PC-9 (cell line): ENCODE measurements at regions of chrX and their contacts with region 1.

Region 1: DNA sequence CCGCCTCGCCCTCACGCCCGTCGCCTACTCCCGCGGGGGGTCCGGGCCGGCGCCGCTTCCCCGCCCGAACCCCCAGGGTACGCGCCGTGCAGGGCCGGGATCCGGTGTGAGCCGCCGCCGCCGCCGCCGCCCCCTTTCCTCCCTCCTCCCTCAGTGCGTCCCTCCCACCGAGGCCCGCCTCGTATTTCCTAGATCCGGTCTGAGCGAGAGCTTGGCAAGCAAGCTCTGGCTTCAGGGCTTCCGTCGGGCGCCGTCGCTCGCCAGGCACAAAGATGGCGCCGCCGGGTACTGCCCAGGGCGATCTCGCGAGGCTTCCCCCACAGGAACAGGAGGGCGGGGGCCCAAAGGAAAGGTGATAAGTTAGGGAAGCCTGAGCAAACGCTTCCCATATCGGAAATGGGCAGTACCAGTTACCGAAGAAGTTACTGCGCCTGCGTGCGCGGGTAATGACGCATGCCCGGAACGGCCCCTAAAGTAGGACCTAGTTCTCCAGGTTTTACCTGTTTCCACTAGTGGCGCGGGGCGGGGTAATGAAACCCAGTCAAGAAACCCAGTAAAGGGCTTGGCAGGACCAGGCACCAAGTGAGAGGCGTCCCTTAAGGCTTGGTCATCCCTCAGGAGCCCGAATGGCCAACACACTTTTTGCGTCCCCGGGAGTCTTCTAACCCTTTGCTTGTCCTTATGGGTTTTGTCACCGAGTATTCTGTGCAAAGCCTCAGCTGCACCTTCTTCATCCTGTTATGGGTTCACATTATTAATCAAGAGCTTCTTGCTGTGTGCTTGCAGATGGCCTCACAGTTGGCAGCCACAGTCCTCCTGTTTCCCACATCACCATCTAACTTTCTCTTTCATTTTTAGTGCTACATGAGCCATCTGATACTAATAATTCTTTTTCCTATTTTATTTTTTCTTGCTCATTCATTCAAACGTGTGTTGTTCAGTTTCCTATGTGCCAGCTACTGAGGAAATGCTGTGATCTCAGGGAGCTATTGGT is at the start of gene TAB3:
- DNase-seq: peak; percentile 95 to 96
- H3K4me3 ChIP-seq: peak within 1 kb of the TSS; percentile 89
- H3K27ac ChIP-seq: peak within 1 kb of the TSS; percentile 77
- H3K4me1 ChIP-seq: peaks cover 53% of the 10 kb centered on the region
- H3K27me3 ChIP-seq: no peaks in the 10 kb centered on the region
- CTCF ChIP-seq: no peak
- total RNA-seq, gene TAB3: 46.7 and 50.8 TPM in 2 replicates

Region 2: GRCh38 chrX:29662759-29663503 is 1226.5 kb before region 1 on chrX:
- CTCF ChIA-PET with region 1: no interaction called
- POLR2A ChIA-PET with region 1: interaction called, 10 read pairs
- intact Hi-C with region 1: no loop called
- DNase-seq: peak; percentile 63 to 90
- H3K4me3 ChIP-seq: peak overlapping the region; percentile 14; the same call in 1 of the 2 replicates
- H3K27ac ChIP-seq: peak overlapping the region; percentile 92
- H3K4me1 ChIP-seq: peaks cover 29% of the 10 kb centered on the region
- H3K27me3 ChIP-seq: no peaks in the 10 kb centered on the region
- CTCF ChIP-seq: no peak

Region 3: GRCh38 chrX:30875961-30876360 is 13.5 kb before region 1 on chrX:
- CTCF ChIA-PET with region 1: no interaction called
- POLR2A ChIA-PET with region 1: interaction called, 6 read pairs
- intact Hi-C with region 1: loop called (anchors 1 kb)
- DNase-seq: peak in 1 of 2 experiments; percentile 86
- H3K4me3 ChIP-seq: peak overlapping the region; percentile 45; the same call in 1 of the 2 replicates
- H3K27ac ChIP-seq: peak overlapping the region; percentile 95
- H3K4me1 ChIP-seq: peaks cover 46% of the 10 kb centered on the region
- H3K27me3 ChIP-seq: no peaks in the 10 kb centered on the region
- CTCF ChIP-seq: no peak

Region 4: DNA sequence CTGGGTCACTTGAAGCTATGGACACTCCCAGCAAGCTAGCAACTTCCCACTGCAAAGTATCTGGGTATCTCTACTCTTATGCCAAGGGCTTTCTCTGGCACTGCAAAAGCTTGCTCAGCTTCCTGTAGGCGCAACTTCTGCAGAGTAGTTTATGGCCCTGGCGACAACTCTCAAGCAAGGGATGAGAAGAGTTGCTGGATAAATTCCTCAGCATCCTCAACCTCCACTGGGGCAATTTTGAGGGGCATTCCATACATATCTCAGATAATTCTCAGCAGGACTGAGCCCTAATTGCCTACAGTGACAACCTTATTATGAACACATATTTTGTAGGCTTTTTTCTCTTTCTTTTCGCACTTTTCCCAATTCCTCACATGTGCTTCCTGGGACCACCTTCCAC is 30.8 kb after region 1 on chrX:
- CTCF ChIA-PET with region 1: no interaction called
- POLR2A ChIA-PET with region 1: no interaction called
- intact Hi-C with region 1: no loop called
- DNase-seq: no peak
- H3K4me3 ChIP-seq: no peak overlapping the region
- H3K27ac ChIP-seq: no peak overlapping the region
- H3K4me1 ChIP-seq: no peaks in the 10 kb centered on the region
- H3K27me3 ChIP-seq: no peaks in the 10 kb centered on the region
- CTCF ChIP-seq: no peak

Region 5: GRCh38 chrX:30935985-30936384 is 46.5 kb after region 1 on chrX:
- CTCF ChIA-PET with region 1: no interaction called
- POLR2A ChIA-PET with region 1: interaction called, 4 read pairs
- intact Hi-C with region 1: loop called (anchors 1 kb)
- DNase-seq: peak in 1 of 2 experiments; percentile 17
- H3K4me3 ChIP-seq: no peak overlapping the region
- H3K27ac ChIP-seq: no peak overlapping the region
- H3K4me1 ChIP-seq: peaks cover 14% of the 10 kb centered on the region; the same call in 1 of the 2 replicates
- H3K27me3 ChIP-seq: no peaks in the 10 kb centered on the region
- CTCF ChIP-seq: 0 out of 2 replicates have a peak, but pooled peaks have one; percentile 34

Region 6: DNA sequence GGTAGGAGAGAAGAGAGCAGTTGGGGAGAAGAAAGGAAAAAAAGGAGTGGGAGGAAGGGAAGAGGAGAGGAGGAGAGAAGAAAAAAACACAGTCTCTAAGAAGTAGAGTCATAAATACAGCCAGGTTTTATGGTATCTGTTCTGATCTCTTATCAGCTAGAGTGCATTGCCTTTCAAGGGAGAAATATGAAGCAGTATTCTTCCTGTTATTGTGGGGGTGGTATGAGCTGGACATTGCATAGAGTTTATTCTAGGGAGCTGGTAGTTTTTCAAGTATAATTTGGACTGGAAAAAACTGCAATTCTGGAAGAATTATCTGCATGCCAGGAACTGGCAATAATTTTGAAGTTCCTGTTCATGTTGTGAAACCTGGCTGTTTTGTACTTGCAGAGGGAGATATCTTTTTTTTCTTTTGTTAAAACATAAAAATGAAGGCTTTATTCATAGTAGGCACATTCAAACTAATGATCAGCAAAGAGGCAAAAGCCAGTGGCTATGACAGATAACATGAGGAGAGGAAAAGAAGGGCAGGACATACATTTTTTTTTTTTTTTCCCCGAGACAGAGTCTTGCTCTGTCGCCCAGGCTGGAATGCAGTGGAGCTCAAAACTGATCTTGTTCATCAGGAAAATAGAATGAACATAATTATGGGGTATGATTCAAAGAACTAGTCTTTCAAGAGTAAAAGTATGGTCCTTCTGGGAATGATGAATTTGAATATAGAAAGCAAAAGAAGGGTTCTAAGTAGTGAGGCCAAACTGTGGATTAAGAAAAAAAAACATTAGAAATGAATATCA is 54.7 kb after region 1 on chrX:
- CTCF ChIA-PET with region 1: no interaction called
- POLR2A ChIA-PET with region 1: interaction called, 7 read pairs
- intact Hi-C with region 1: loop called (anchors 5 kb)
- DNase-seq: no peak
- H3K4me3 ChIP-seq: no peak overlapping the region
- H3K27ac ChIP-seq: peak overlapping the region; percentile 34; the same call in 1 of the 2 replicates
- H3K4me1 ChIP-seq: peaks cover 8% of the 10 kb centered on the region
- H3K27me3 ChIP-seq: no peaks in the 10 kb centered on the region
- CTCF ChIP-seq: no peak

Region 7: GRCh38 chrX:30951003-30951402 is 61.6 kb after region 1 on chrX:
- CTCF ChIA-PET with region 1: no interaction called
- POLR2A ChIA-PET with region 1: interaction called, 4 read pairs
- intact Hi-C with region 1: loop called (anchors 2 kb)
- DNase-seq: peak in 1 of 2 experiments; percentile 72
- H3K4me3 ChIP-seq: no peak overlapping the region
- H3K27ac ChIP-seq: no peak overlapping the region
- H3K4me1 ChIP-seq: peaks cover 13% of the 10 kb centered on the region; the same call in 1 of the 2 replicates
- H3K27me3 ChIP-seq: no peaks in the 10 kb centered on the region
- CTCF ChIP-seq: no peak

Region 8: DNA sequence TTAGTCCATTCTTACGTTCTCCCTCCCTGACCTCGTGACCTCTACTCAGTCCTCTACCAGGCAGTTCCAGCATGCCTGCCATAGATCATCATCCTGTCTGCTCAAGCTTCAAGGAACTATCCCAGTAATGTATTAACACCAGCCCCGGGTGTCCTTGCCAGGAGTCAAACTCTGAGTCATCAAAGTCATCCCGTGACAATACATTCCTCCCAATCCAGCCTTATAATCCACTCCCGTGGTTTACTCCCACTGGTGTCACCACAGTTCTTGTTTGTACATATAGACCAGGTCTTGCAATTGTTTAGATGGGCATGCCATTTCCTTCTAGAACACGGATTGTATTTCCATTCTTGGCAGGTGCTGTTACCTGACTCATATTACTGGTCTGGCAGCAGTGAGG is 68.3 kb after region 1 on chrX:
- CTCF ChIA-PET with region 1: no interaction called
- POLR2A ChIA-PET with region 1: no interaction called
- intact Hi-C with region 1: loop called (anchors 1 kb)
- DNase-seq: peak; percentile 71 to 89
- H3K4me3 ChIP-seq: no peak overlapping the region
- H3K27ac ChIP-seq: no peak overlapping the region; the same call in 1 of the 2 replicates
- H3K4me1 ChIP-seq: no peaks in the 10 kb centered on the region
- H3K27me3 ChIP-seq: no peaks in the 10 kb centered on the region
- CTCF ChIP-seq: no peak

Region 9: DNA sequence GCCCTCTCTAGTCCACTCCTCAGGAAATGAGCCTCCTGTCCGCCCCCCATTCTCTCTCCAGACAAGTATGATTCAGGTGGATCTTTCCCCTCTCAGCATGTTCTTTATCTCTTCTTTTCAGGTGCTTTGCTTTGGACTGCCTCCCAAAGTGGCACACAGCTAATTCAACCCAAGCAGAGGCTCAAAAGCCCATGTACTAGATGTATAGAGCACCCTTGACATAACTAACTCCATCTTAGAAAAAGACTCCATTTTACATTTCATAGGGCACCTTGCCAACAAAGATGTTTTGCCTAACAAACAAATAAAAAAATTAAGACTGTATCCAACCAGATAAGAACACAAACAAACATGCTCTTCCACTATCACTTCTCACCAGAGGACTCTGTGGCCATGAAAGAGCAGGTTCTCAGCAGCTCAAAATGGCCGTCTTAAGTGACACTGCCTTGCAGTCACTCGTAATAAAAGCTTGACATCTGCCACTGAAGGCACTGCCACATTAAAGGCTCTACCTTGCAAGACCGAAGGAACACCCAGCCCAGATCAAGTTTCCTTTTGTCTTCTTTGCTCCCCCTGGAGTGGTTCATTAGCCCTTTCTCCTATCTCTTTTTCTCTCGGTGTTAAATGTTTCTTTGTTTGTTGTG is 84.5 kb after region 1 on chrX:
- CTCF ChIA-PET with region 1: no interaction called
- POLR2A ChIA-PET with region 1: no interaction called
- intact Hi-C with region 1: no loop called
- DNase-seq: no peak
- H3K4me3 ChIP-seq: no peak overlapping the region
- H3K27ac ChIP-seq: no peak overlapping the region
- H3K4me1 ChIP-seq: no peaks in the 10 kb centered on the region
- H3K27me3 ChIP-seq: no peaks in the 10 kb centered on the region
- CTCF ChIP-seq: no peak